K562 (cell line): ENCODE measurements at regions of chr13 and their contacts with region 1.

Region 1: DNA sequence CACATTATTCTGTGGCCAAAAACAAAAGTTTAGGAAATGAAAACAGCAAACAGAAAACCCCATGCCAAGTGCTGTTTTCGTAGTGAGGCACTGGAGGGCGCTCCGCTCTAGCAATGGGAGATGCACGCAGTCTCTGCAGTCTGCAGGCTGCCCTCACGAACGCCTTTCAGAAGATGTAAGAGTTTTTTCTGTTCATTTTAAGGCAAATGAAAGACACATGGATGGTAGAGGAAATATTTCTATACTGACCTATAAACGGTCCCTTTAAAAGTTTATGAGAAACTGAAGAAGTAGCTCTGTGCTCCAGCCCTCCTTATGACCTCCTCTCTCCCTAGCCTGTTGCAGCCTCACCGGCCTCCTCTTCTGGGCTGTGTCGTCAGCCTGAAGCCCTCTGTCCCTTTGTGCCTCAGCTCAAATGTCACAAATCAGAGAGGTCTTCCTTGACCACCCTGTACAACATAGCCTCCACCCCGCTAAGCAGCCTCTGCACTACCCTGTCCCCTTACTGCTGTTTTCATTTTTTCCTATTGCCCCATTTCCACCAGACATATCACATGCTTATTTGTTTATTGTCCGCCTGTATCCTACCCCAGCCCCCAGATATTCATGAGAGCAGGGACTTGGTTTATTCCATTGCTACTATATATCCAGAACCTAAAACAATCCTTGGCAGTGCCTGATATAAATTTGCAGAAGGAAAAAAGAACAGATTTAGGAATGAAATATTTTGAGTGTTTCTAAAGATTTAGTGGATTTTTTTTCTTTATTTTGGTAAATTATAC is 116.4 kb downstream of the TM9SF2 start:
- DNase-seq: peak; percentile 20 to 54 (median 26)
- ATAC-seq: peak; percentile 79
- H3K4me3 ChIP-seq: no peak overlapping the region
- H3K27ac ChIP-seq: no peak overlapping the region
- H3K4me1 ChIP-seq: peaks cover 3 to 4% of the 10 kb centered on the region in 2 experiments; a peak in 3 of 5 replicates
- H3K27me3 ChIP-seq: no peaks in the 10 kb centered on the region
- CTCF ChIP-seq: peak; percentile 64 to 76 (median 71)
- EP300 ChIP-seq: no peak
- POLR2A ChIP-seq: no peak
- RAD21 ChIP-seq: peak; percentile 59 to 76

Region 2: GRCh38 chr13:99442273-99442895 is 175.3 kb before region 1 on chr13:
- CTCF ChIA-PET with region 1: interaction called, 3 read pairs
- POLR2A ChIA-PET with region 1: no interaction called
- in situ Hi-C with region 1: no loop called
- intact Hi-C with region 1: loop called (anchors 1 kb)
- DNase-seq: peak; percentile 30 to 55 (median 36)
- ATAC-seq: peak; percentile 73
- H3K4me3 ChIP-seq: no peak overlapping the region
- H3K27ac ChIP-seq: no peak overlapping the region
- H3K4me1 ChIP-seq: no peaks in the 10 kb centered on the region; a peak in 1 of 5 replicates
- H3K27me3 ChIP-seq: peaks cover 0 to 13% of the 10 kb centered on the region in 2 experiments; a peak in 2 of 5 replicates
- CTCF ChIP-seq: peak; percentile 68 to 82 (median 69); a peak in 5 of 6 replicates
- EP300 ChIP-seq: no peak
- POLR2A ChIP-seq: no peak
- RAD21 ChIP-seq: peak; percentile 80 to 82

Region 3: DNA sequence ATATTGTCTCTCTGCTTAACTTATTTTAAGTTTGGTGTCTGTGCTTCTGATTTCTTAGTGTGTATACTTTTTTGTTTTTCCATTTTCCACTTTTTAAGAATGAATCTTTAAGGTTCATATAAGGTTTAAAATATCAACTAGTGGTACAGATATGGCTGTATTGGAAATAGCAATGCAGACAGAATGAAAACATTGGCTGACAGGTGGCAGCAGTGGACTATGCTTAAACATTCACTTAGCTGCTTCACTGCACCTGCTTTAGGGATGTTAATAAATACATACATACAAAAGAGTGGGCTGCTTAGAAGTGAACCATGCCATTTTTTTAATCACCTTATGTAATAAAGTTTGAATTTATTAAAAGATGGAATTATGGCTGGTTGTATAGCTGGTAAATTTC is 89.1 kb before region 1 on chr13:
- CTCF ChIA-PET with region 1: no interaction called
- POLR2A ChIA-PET with region 1: no interaction called
- in situ Hi-C with region 1: no loop called
- intact Hi-C with region 1: loop called (anchors 5 kb)
- DNase-seq: no peak
- ATAC-seq: no peak
- H3K4me3 ChIP-seq: no peak overlapping the region
- H3K27ac ChIP-seq: no peak overlapping the region
- H3K4me1 ChIP-seq: peaks cover 0 to 8% of the 10 kb centered on the region in 2 experiments; a peak in 3 of 5 replicates
- H3K27me3 ChIP-seq: no peaks in the 10 kb centered on the region
- CTCF ChIP-seq: peak in 1 of 3 experiments; percentile 20; a peak in 2 of 6 replicates
- EP300 ChIP-seq: no peak
- POLR2A ChIP-seq: no peak
- RAD21 ChIP-seq: no peak